A673 (cell line): ENCODE measurements at regions of chr11 and their contacts with region 1.

Region 1: GRCh38 chr11:62542750-62543567 is 3.6 kb downstream of the AHNAK start:
- DNase-seq: peak; percentile 89
- H3K4me3 ChIP-seq: peak overlapping the region; percentile 66
- H3K27ac ChIP-seq: peak overlapping the region; percentile 32
- H3K4me1 ChIP-seq: peaks cover 68% of the 10 kb centered on the region
- H3K27me3 ChIP-seq: no peaks in the 10 kb centered on the region
- CTCF ChIP-seq: peak; percentile 99

Region 2: DNA sequence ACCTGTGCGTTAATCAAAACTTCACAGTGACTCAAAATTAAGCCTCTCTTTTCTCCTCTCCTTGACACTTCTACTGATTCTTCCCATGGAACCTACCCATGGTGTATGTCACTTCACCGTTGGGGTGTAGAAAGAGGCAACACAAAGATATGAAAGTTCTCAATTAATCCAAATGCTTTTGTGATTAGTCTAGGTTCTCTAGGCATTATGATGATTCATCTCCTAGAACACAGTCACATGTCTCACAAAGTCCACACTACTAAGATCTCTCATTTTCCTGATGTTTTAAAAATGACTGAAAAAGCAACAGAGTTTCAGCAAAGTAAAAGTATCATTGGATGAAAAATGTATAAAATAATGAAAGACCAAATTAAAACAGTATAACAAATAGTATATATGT is 286.7 kb before region 1 on chr11:
- CTCF ChIA-PET with region 1: no interaction called
- POLR2A ChIA-PET with region 1: no interaction called
- intact Hi-C with region 1: no loop called
- DNase-seq: no peak
- H3K4me3 ChIP-seq: no peak overlapping the region
- H3K27ac ChIP-seq: no peak overlapping the region
- H3K4me1 ChIP-seq: no peaks in the 10 kb centered on the region
- H3K27me3 ChIP-seq: peaks cover 23% of the 10 kb centered on the region
- CTCF ChIP-seq: no peak

Region 3: DNA sequence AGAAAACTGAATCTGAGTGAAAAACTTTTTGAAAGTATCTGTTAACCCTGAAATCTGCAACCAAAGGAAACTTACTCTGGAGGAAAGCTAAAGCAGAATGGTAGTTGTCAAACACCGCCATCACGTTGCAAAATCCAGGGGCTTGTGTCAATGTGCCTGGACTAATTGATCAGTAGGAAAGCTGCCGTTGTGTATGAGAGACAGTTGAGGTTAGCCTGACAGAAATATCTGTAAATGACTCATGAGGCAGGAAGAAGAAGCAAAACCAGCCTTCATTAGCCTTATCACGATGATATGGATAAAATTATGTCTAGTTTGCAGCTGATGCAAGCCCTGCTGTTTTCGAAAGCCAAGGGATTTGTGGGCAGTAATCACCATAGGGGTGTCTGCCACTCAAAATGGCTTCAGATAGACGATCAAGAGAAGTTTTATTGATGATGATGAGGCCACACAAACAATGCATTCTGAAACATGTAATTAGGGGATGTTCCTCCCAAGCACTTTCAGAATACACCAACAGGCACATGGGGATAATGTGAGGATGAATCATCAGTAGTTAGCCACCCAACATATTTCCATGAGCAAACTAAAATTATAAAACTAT is 115.2 kb before region 1 on chr11:
- CTCF ChIA-PET with region 1: interaction called, 71 read pairs
- POLR2A ChIA-PET with region 1: interaction called, 11 read pairs
- intact Hi-C with region 1: loop called (anchors 1 kb)
- DNase-seq: no peak
- H3K4me3 ChIP-seq: no peak overlapping the region
- H3K27ac ChIP-seq: no peak overlapping the region
- H3K4me1 ChIP-seq: no peaks in the 10 kb centered on the region
- H3K27me3 ChIP-seq: no peaks in the 10 kb centered on the region
- CTCF ChIP-seq: no peak

Region 4: DNA sequence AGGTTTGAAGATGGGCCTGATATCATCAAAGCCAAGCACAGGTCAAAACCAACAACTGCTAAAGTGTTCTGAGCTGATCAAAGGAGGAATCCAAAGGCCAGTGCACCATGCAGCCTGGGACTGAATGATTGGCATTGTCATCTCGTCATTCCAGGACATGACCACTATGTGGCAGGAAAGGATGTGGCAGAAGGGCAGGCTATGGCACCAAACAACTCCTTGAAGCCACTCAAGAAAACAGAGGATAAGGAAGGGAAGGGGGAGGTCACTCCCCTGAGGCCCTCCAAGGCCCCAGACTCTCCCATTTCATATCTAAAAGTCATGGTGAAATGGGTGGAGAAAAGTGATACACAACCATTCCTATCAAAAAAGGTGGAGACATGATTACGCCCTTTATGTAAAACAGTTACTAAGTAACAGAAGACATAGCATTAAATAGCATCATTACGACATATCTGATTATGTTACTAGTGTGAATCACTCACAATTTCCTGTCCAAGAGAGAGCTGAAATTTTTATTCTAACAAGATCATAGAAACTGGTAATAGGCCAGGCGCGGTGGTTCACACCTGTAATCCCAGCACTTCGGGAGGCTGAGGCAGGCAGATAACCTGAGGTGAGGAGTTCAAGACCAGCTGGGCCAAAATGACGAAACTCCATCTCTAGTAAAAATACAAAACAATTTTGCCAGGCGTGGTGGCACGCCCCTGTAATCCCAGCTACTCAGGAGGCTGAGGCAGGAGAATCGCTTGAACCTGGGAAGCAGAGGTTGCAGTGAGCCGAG is 45.6 kb before region 1 on chr11:
- CTCF ChIA-PET with region 1: interaction called, 4 read pairs
- POLR2A ChIA-PET with region 1: no interaction called
- intact Hi-C with region 1: loop called (anchors 5 kb)
- DNase-seq: peak; percentile 81
- H3K4me3 ChIP-seq: no peak overlapping the region
- H3K27ac ChIP-seq: no peak overlapping the region
- H3K4me1 ChIP-seq: peaks cover 10% of the 10 kb centered on the region
- H3K27me3 ChIP-seq: no peaks in the 10 kb centered on the region
- CTCF ChIP-seq: peak; percentile 68

Region 5: GRCh38 chr11:62560566-62561103 is 17.7 kb after region 1 on chr11:
- CTCF ChIA-PET with region 1: interaction called, 26 read pairs
- POLR2A ChIA-PET with region 1: no interaction called
- intact Hi-C with region 1: no loop called
- DNase-seq: peak; percentile 96
- H3K4me3 ChIP-seq: no peak overlapping the region
- H3K27ac ChIP-seq: peak overlapping the region; percentile 24
- H3K4me1 ChIP-seq: peaks cover 48% of the 10 kb centered on the region
- H3K27me3 ChIP-seq: no peaks in the 10 kb centered on the region
- CTCF ChIP-seq: peak; percentile 84

Region 6: GRCh38 chr11:62678770-62679696 is 136.1 kb after region 1 on chr11 and contains the start of gene UBXN1:
- CTCF ChIA-PET with region 1: interaction called, 10 read pairs
- POLR2A ChIA-PET with region 1: no interaction called
- intact Hi-C with region 1: no loop called
- DNase-seq: peak; percentile 98
- H3K4me3 ChIP-seq: peak within 1 kb of the TSS; percentile 85
- H3K27ac ChIP-seq: peak within 1 kb of the TSS; percentile 84
- H3K4me1 ChIP-seq: peaks cover 23% of the 10 kb centered on the region
- H3K27me3 ChIP-seq: no peaks in the 10 kb centered on the region
- CTCF ChIP-seq: no peak
- total RNA-seq, gene UBXN1: 143 and 147 TPM in 2 replicates